H1 (cell line): ENCODE measurements at regions of chr10 and their contacts with region 1.

Region 1: DNA sequence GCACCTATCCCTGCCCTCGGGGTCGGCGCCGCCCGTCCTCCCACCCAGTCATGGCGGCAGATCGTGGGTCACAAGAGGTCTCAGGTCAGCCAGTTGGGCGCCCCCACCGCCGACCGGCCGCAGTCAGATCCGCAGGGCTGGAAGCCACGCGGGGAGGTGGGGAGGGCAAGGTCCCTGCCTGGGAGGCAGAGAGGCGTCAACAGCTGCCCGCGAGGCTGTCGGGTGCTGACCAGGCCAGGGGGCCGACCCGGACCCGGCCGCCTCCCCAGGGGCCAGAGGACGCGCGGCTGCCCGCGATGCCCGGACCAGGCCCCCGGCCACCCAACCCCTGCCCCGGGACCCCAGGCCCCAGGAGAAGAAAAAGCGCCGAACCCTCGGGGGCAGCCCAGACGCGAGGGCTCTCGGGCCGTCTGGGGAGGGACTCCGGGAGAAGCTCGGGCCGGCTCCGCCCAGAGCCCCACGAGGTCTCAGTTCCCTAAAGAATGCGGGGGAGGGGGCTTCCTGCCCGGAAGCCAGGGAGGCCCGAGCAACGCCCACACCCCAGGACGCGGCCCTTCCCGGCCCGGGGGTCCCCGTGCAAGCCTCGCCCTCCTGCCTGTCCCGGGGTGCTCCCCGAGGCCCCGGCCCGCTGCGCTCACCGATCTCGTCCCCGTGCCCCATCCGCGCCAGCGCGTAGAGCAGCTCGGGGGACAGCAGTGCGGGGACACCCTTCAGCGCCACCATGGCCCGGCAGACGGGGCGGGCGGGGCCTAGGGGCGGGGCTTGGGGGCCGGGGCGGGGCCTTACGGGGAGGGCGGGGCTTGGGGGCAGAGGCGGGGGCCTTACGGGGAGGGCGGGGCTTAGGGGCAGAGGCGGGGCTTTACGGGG is at the start of gene FUOM:
- DNase-seq: peak; percentile 67 to 95
- H3K4me3 ChIP-seq: peak within 1 kb of the TSS; percentile 51 to 78 (median 68)
- H3K27ac ChIP-seq: no peak within 1 kb of the TSS; the same call in 1 of the 2 replicates
- H3K4me1 ChIP-seq: peaks cover 0 to 6% (median 3%) of the 10 kb centered on the region in 4 experiments; a peak in 4 of 7 replicates
- H3K27me3 ChIP-seq: peaks cover 0 to 19% (median 7%) of the 10 kb centered on the region in 4 experiments; a peak in 5 of 7 replicates
- CTCF ChIP-seq: no peak
- EP300 ChIP-seq: no peak
- POLR2A ChIP-seq: peak in 1 of 2 experiments; percentile 80; a peak in 2 of 3 replicates
- RAD21 ChIP-seq: no peak
- total RNA-seq, gene FUOM: 21.1 and 22.0 TPM in 2 replicates

Region 2: GRCh38 chr10:133370030-133370786 is 12.7 kb after region 1 on chr10:
- CTCF ChIA-PET with region 1: interaction called, 11 read pairs
- POLR2A ChIA-PET with region 1: interaction called, 11 read pairs
- DNase-seq: no peak
- H3K4me3 ChIP-seq: no peak overlapping the region
- H3K27ac ChIP-seq: no peak overlapping the region
- H3K4me1 ChIP-seq: no peaks in the 10 kb centered on the region; a peak in 2 of 7 replicates
- H3K27me3 ChIP-seq: peaks cover 0 to 6% (median 4%) of the 10 kb centered on the region in 4 experiments; a peak in 3 of 7 replicates
- CTCF ChIP-seq: no peak
- EP300 ChIP-seq: no peak
- POLR2A ChIP-seq: no peak
- RAD21 ChIP-seq: no peak